Right ventricle myocardium inferior (tissue), 1 donor: ENCODE measurements at regions of chr9 and their contacts with region 1.

Region 1: DNA sequence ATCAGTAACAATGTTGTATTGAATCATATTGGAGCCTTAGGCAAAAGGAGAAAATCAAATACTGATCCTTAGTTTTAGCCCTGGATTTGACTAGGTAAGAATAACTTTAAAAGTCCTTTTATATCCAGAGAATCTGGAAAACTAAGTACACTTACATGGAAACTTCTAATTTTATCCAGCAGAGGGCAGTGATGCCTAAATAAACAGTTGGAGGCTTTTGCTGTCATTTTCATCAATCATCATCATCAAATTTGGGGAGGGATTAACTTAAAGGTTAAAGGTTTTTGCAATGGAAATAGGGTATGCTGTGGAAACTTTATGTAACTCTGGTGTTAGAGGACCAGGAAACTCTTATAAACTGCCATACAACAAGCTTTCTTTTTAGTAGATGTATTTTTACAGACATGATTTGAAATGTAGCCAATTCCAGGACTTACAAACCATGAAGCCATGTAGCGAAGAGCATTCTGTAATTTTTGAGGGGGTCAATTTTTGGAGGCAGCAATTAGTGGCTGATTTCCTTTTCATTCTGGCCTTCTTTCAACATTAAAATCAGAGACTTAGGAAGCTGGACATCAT is 112.7 kb downstream of the OSTF1 start:
- DNase-seq: no peak
- ATAC-seq: no peak

Region 2: DNA sequence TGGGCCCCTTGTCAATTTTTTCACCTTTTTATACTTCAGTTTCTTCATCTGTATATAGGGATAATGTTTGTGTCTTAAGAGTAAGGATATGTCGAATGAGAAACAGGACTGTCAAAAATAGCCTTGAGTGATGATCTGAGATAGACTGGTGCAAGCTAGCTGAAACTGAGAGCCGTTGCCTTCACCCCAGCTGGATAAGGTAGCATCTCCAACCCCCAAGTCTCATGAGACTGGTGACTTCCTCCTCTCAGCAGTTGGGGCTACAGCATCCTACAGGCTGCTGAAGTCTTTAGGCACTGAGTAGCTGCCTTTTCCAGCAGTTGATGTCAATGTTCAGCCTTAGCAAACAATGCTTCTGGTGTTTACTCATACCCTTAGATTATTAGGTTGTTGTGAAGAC is 217.5 kb after region 1 on chr9:
- intact Hi-C with region 1: no loop called
- DNase-seq: no peak
- ATAC-seq: peak; percentile 23

Region 3: GRCh38 chr9:75866273-75866871 is 665.4 kb after region 1 on chr9:
- intact Hi-C with region 1: loop called (anchors 2 kb)
- DNase-seq: no peak
- ATAC-seq: no peak